Activated CD8-positive, alpha-beta memory T cell treated with anti-CD3 and anti-CD28 coated beads, Interleukin-2, amount 10 ng/mL, durations not matched to agents 7 days and 5 days (primary cell): ENCODE measurements at regions of chr6 and their contacts with region 1.

Region 1: GRCh38 chr6:20319520-20320357 is 81.9 kb upstream of the E2F3 start:
- DNase-seq: peak; percentile 93
- ATAC-seq: peak; percentile 93
- H3K4me3 Mint-ChIP-seq: peak overlapping the region; percentile 86
- H3K27ac Mint-ChIP-seq: peak overlapping the region; percentile 99
- H3K4me1 Mint-ChIP-seq: peaks cover 21% of the 10 kb centered on the region
- H3K27me3 Mint-ChIP-seq: peaks cover 5% of the 10 kb centered on the region

Region 2: GRCh38 chr6:20274137-20274536 is 45.6 kb before region 1 on chr6:
- CTCF ChIA-PET with region 1: no interaction called
- DNase-seq: no peak
- ATAC-seq: no peak
- H3K4me3 Mint-ChIP-seq: no peak overlapping the region
- H3K27ac Mint-ChIP-seq: no peak overlapping the region
- H3K4me1 Mint-ChIP-seq: no peaks in the 10 kb centered on the region
- H3K27me3 Mint-ChIP-seq: peaks cover 17% of the 10 kb centered on the region

Region 3: DNA sequence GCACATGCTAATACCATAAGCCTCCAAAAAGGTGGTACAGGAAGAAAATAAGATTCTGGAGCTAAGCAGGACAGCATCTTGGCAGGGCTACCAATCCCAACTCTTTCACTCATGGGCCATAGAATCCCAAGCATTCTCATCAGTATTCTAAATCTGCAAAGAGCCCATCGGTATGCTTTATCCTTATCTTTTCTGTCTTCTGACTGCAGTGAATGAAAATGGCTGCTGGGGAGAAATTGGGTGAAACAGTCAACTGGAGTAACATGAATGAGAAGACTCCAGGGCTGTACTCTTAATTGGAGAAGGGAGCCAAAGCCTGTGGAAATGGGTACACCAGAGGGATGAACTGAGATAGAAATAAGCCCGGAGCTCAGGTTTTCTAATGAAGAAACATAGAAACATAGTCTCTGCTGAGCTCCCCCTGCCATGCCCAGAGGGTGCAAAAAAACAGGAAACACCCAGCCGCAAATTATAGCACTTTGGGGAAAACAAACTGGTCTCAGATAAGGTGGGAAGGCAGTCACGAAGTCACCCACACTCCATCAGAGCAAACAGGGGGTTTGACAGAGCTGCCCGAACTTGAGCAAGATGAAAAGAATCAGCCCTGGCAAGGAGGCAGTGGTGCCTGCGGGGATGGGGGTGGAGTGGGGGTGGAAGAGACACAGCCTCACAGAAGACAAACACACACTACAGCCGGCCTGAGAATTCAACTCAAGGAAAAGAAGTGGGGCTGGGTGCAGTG is 46.5 kb after region 1 on chr6:
- CTCF ChIA-PET with region 1: interaction called, 10 read pairs
- DNase-seq: peak; percentile 59
- ATAC-seq: peak; percentile 54
- H3K4me3 Mint-ChIP-seq: peak overlapping the region; percentile 59
- H3K27ac Mint-ChIP-seq: peak overlapping the region; percentile 95
- H3K4me1 Mint-ChIP-seq: peaks cover 50% of the 10 kb centered on the region
- H3K27me3 Mint-ChIP-seq: no peaks in the 10 kb centered on the region

Region 4: DNA sequence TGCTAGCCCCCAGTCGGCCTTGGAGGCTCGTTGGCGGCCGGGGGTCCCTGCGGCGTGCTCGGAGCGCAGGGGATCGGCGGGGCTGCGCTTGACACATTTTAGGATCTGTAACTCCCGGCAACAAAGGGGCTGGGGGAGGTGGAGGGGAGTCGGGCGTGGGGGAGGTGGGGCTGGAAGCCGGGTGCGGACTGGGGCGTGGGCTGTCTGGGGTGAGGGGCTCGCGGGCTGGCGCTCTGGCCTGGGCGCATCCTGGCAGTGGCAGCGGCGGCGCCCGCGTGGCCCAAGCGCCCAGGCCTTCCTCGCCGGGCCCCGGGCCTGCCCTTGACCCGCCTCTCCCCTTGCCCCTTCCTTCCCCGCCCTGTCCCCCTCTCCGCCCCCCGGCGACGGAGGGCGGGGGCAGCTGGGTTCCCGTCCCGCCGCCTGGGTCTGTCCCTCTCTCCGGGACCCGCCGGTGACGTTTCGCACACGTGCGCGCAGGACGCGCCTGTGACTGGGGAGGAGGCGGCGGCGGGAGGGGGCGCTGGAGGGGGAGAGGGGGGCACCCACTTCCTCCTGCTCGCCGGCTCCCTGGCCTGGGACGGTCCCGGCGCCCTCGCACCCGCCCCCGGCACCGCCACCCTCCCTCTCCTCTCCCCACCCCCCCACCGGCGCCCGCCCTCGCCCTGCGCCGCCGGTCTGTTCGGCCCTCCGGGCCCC is 83.5 kb after region 1 on chr6:
- CTCF ChIA-PET with region 1: interaction called, 23 read pairs
- DNase-seq: peak; percentile 96
- ATAC-seq: peak; percentile 58
- H3K4me3 Mint-ChIP-seq: peak overlapping the region; percentile 92
- H3K27ac Mint-ChIP-seq: peak overlapping the region; percentile 93
- H3K4me1 Mint-ChIP-seq: peaks cover 54% of the 10 kb centered on the region
- H3K27me3 Mint-ChIP-seq: no peaks in the 10 kb centered on the region